GM12878 (cell line): ENCODE measurements at regions of chr17 and their contacts with region 1.

Region 1: DNA sequence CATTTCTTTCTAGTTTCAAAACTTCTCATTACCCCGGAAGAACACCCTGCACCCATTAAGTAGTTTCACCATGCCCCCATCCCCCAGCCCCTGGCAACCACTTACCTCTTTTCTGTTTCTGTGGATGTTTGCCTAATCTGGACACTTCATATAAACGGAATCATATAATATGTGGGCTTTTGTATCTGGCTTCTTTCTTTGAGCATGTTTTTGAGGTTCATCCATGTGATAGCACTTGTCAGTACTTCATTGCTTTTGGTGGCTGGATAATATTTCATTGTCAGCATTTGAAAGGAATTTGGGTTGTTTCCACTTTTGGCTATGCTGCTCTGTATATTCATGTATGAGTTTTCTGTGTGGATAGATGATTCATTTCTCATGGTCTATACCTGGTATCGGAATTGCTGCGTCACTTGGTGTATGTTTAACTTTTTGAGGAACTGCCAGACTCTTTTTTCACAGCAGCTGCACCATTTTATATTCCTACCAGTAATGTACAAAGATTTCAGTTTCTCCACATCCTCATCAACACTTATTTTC is 30.0 kb upstream of the SLC5A10 start:
- DNase-seq: peak; percentile 90
- ATAC-seq: peak; percentile 79
- H3K4me3 ChIP-seq: 0 out of 2 replicates have a peak overlapping the region, but pooled peaks have one; percentile 37
- H3K27ac ChIP-seq: peak overlapping the region; percentile 98
- H3K4me1 ChIP-seq: peaks cover 28% of the 10 kb centered on the region
- H3K27me3 ChIP-seq: no peaks in the 10 kb centered on the region
- CTCF ChIP-seq: no peak
- EP300 ChIP-seq: peak; percentile 84 to 92
- POLR2A ChIP-seq: no peak
- RAD21 ChIP-seq: 0 out of 2 replicates have a peak, but pooled peaks have one; percentile 5

Region 2: GRCh38 chr17:18896146-18896545 is 25.8 kb before region 1 on chr17:
- CTCF ChIA-PET with region 1: interaction called, 8 read pairs
- POLR2A ChIA-PET with region 1: interaction called, 10 read pairs
- RAD21 ChIA-PET with region 1: interaction called, 12 read pairs
- SMC1A ChIA-PET with region 1: interaction called, 6 read pairs
- in situ Hi-C with region 1: no loop called
- intact Hi-C with region 1: loop called (anchors 1 kb)
- DNase-seq: no peak
- ATAC-seq: no peak
- H3K4me3 ChIP-seq: no peak overlapping the region
- H3K27ac ChIP-seq: no peak overlapping the region
- H3K4me1 ChIP-seq: peaks cover 23% of the 10 kb centered on the region
- H3K27me3 ChIP-seq: no peaks in the 10 kb centered on the region
- CTCF ChIP-seq: no peak
- EP300 ChIP-seq: no peak
- POLR2A ChIP-seq: no peak
- RAD21 ChIP-seq: no peak

Region 3: DNA sequence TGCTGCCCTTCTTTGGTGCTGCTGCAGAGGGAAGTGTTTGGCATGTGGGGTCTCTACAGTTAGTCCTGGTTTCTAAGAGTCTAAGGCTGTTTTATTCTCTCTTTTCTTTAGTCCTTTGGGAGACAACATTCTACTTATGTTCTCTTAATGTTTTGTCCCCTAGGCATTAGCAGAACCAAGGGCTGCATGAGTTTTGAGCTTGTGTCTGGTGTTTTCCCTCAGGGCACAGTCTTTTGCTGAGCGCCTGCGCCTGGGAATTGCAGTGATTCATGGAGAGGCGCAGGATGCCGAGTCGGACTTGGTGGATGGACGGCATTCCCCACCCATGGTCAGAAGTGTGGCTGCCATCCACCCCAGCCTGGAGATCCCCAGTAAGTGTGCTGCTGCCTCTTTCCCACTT is 11.1 kb before region 1 on chr17:
- CTCF ChIA-PET with region 1: interaction called, 3 read pairs
- POLR2A ChIA-PET with region 1: interaction called, 11 read pairs
- RAD21 ChIA-PET with region 1: no interaction called
- SMC1A ChIA-PET with region 1: interaction called, 3 read pairs
- in situ Hi-C with region 1: no loop called
- intact Hi-C with region 1: no loop called
- DNase-seq: no peak
- ATAC-seq: no peak
- H3K4me3 ChIP-seq: no peak overlapping the region
- H3K27ac ChIP-seq: no peak overlapping the region
- H3K4me1 ChIP-seq: no peaks in the 10 kb centered on the region
- H3K27me3 ChIP-seq: no peaks in the 10 kb centered on the region
- CTCF ChIP-seq: no peak
- EP300 ChIP-seq: no peak
- POLR2A ChIP-seq: no peak
- RAD21 ChIP-seq: no peak

Region 4: DNA sequence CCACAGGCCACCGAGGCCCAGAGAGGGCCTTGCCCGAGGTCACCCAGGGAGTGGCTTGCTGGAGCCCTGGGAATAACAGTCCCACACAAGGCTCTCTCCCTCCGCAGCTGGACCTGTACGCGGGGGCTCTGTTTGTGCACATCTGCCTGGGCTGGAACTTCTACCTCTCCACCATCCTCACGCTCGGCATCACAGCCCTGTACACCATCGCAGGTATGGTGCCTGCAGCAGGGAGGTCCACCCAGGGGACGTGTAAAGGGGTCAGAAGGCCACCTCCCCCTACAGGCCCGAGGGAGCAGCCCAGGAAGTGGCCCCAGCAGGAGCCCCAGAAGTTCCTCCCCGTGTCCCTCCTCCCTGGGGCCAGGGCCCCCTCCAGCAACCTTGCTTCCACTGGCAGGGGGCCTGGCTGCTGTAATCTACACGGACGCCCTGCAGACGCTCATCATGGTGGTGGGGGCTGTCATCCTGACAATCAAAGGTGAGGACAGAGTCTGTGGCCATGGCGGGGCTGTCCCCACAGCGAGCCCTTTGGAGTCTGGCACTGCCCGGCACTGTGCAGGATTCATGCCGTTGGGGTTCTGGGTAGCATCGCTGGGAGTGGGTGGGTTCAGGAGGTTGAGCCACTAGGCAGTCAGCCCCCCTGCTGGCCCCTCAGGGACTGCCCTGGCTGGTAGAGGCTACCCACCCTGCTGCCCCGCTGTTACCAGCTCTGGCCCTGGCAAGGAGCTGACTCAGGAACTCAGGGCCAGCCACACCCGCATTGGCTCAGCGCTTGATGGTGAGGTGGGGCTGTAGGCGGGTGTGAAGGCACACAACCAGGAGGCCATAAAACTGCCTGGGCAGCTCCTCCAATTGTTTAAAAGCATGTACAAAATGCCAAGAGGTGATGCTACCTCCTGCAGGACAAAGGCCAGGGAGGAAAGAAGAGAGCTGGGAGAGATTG is 47.2 kb after region 1 on chr17:
- CTCF ChIA-PET with region 1: no interaction called
- POLR2A ChIA-PET with region 1: no interaction called
- RAD21 ChIA-PET with region 1: no interaction called
- SMC1A ChIA-PET with region 1: no interaction called
- in situ Hi-C with region 1: no loop called
- intact Hi-C with region 1: no loop called
- DNase-seq: no peak
- ATAC-seq: no peak
- H3K4me3 ChIP-seq: no peak overlapping the region
- H3K27ac ChIP-seq: no peak overlapping the region
- H3K4me1 ChIP-seq: no peaks in the 10 kb centered on the region; the same call in 1 of the 2 replicates
- H3K27me3 ChIP-seq: no peaks in the 10 kb centered on the region
- CTCF ChIP-seq: no peak
- EP300 ChIP-seq: no peak
- POLR2A ChIP-seq: no peak
- RAD21 ChIP-seq: no peak

Region 5: GRCh38 chr17:18992454-18993130 is 70.6 kb after region 1 on chr17:
- CTCF ChIA-PET with region 1: no interaction called
- POLR2A ChIA-PET with region 1: no interaction called
- RAD21 ChIA-PET with region 1: no interaction called
- SMC1A ChIA-PET with region 1: no interaction called
- in situ Hi-C with region 1: no loop called
- intact Hi-C with region 1: no loop called
- DNase-seq: peak; percentile 38
- ATAC-seq: peak; percentile 73
- H3K4me3 ChIP-seq: no peak overlapping the region
- H3K27ac ChIP-seq: peak overlapping the region; percentile 18; the same call in 1 of the 2 replicates
- H3K4me1 ChIP-seq: peaks cover 15% of the 10 kb centered on the region
- H3K27me3 ChIP-seq: no peaks in the 10 kb centered on the region
- CTCF ChIP-seq: no peak
- EP300 ChIP-seq: no peak
- POLR2A ChIP-seq: no peak
- RAD21 ChIP-seq: no peak